Stomach (tissue), 19 donors: ENCODE measurements at regions of chr19 and their contacts with region 1.

Region 1: GRCh38 chr19:6218491-6219162 is 61.1 kb downstream of the MLLT1 start:
- DNase-seq: peak; percentile 91 to 94
- H3K4me3 ChIP-seq: no peak overlapping the region
- H3K27ac ChIP-seq: peak overlapping the region in 2 of 5 donors; percentile 21
- H3K4me1 ChIP-seq: peaks cover 42 to 73% (median 66%) of the 10 kb centered on the region in 4 donors
- H3K27me3 ChIP-seq: no peaks in the 10 kb centered on the region
- CTCF ChIP-seq: peak in 6 of 7 experiments; percentile 81 to 99 (median 98)
- EP300 ChIP-seq: no peak
- POLR2A ChIP-seq: no peak

Region 2: DNA sequence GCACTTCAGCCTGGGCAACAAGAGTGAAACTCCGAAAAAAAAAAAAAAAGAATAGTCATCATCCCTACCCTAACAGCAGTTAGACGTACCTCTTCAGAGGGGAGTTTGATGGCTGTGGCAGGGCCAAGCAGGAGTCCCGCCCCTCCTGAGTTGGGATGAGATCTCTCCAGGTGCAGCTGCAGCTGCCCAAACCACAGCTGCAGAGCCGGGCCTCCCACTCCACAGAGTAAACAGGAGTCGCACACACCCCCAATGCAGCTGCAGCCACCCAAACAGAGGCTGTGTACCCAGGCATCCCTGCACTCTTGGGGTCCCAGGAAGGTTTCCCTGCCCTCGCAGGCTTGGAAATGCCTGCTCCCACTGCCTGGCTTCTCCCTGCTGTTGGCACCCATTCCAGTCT is 78.6 kb after region 1 on chr19:
- intact Hi-C with region 1: loop called (anchors 5 kb)
- DNase-seq: no peak
- H3K4me3 ChIP-seq: no peak overlapping the region
- H3K27ac ChIP-seq: no peak overlapping the region
- H3K4me1 ChIP-seq: no peaks in the 10 kb centered on the region
- H3K27me3 ChIP-seq: no peaks in the 10 kb centered on the region
- CTCF ChIP-seq: no peak
- EP300 ChIP-seq: no peak
- POLR2A ChIP-seq: no peak